ENCODE measurements at regions of chr9 and their contacts with region 1.

Region 1: DNA sequence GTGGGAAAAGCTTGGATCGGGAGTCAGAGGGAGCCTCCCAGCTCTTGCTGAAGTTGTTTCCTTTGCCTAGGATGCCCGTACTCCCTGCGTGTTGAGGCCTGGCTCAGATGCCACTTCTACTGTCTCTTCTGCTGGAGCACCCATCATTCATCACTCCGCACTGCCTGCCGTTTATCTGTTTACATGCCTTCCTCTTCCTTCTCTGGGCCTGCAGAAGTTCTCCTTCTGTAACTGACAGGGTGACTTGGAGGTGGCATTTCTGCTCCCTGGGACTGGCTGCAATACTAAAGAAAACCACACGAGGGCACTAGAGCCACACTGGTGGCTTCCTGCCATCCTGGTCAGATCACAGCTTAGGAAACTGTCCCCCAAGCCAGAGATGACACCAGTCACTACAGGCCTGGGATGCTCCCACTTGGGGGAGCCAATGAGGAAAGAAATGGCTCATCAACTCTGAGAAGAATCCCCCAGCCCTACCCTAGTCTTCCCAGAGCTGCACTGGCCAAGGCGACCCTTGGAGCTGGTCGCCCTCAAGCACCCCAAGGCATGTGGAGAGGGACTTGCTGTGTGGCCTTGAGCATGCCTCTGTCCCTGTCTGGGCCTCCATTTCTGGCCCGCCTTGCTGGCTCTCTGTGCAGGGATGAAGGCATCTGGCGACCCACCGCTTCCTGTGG is 9.7 kb upstream of the SLC25A51 start:
- DNase-seq: peak; percentile 54 to 85 (median 65)
- ATAC-seq: peak; percentile 89
- H3K4me3 ChIP-seq: no peak overlapping the region
- H3K4me3 Mint-ChIP-seq: no peak overlapping the region
- H3K27ac ChIP-seq: no peak overlapping the region
- H3K27ac Mint-ChIP-seq: peak overlapping the region in 1 of 9 donors; percentile 59
- H3K4me1 ChIP-seq: no peaks in the 10 kb centered on the region
- H3K4me1 Mint-ChIP-seq: peaks cover 0 to 7% (median 4%) of the 10 kb centered on the region in 7 donors
- H3K27me3 ChIP-seq: no peaks in the 10 kb centered on the region
- H3K27me3 Mint-ChIP-seq: peaks cover 0 to 4% (median 0%) of the 10 kb centered on the region in 5 donors

Region 2: GRCh38 chr9:38035873-38036272 is 122.3 kb after region 1 on chr9:
- CTCF ChIA-PET with region 1: no interaction called
- POLR2A ChIA-PET with region 1: no interaction called
- intact Hi-C with region 1: no loop called
- DNase-seq: no peak
- ATAC-seq: no peak
- H3K4me3 ChIP-seq: no peak overlapping the region
- H3K4me3 Mint-ChIP-seq: no peak overlapping the region
- H3K27ac ChIP-seq: no peak overlapping the region
- H3K27ac Mint-ChIP-seq: no peak overlapping the region
- H3K4me1 ChIP-seq: no peaks in the 10 kb centered on the region
- H3K4me1 Mint-ChIP-seq: peaks cover 0 to 2% (median 0%) of the 10 kb centered on the region in 7 donors
- H3K27me3 ChIP-seq: no peaks in the 10 kb centered on the region
- H3K27me3 Mint-ChIP-seq: peaks cover 0 to 3% (median 0%) of the 10 kb centered on the region in 5 donors

Region 3: DNA sequence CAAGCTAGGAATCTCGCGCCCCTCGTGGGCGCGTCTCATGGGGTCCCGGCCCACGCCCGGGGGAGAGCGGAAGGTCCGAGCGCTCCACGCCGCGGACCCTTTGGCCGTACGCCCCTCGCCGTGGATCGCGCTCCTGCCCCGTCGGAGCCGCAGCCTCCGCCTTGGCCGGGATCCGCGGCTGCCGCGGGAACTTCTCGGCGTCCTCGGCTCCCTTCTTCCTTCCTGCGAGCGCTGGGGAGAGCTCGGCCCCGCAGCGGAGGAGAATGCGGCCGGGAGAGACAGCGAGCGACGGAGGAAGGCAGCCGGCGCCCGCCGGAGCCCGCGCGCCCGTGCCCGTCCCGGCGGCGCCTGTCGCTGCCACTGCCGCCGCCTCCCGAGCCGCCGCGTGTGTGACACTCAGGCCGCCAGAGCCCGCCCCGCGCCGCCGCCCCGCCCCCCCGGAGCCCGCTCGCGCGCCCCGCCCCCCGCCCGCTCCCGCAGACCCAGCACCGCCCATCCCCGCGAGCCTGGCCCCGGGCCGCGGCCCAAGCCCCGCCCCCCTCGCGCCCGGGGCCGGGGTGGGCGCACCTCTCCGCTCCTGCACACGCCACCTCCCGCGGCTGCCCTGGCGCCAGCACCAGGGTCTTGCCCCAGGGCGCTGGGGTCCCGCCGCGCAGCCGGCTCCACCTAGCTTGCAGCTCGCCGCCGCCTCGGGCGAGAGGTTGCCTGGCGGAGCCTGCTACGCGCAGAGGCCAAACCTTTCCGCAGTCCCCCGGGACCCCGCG is 155.4 kb after region 1 on chr9 and contains the start of gene SHB:
- CTCF ChIA-PET with region 1: interaction called, 7 read pairs
- POLR2A ChIA-PET with region 1: interaction called, 3 read pairs
- intact Hi-C with region 1: loop called in 1 of 2 experiments (anchors 2 kb)
- DNase-seq: peak; percentile 54 to 80 (median 75)
- ATAC-seq: peak; percentile 89
- H3K4me3 ChIP-seq: peak within 1 kb of the TSS; percentile 83
- H3K4me3 Mint-ChIP-seq: peak within 1 kb of the TSS; percentile 76 to 96 (median 88)
- H3K27ac ChIP-seq: peak within 1 kb of the TSS; percentile 76
- H3K27ac Mint-ChIP-seq: peak within 1 kb of the TSS in 8 of 9 donors; percentile 44 to 81 (median 73)
- H3K4me1 ChIP-seq: peaks cover 6 to 18% of the 10 kb centered on the region in 2 donors
- H3K4me1 Mint-ChIP-seq: peaks cover 5 to 39% (median 33%) of the 10 kb centered on the region in 7 donors
- H3K27me3 ChIP-seq: no peaks in the 10 kb centered on the region
- H3K27me3 Mint-ChIP-seq: peaks cover 0 to 58% (median 0%) of the 10 kb centered on the region in 5 donors
- total RNA-seq, gene SHB: 0.29 to 2.0 (median 0.81) TPM

Region 4: GRCh38 chr9:38096238-38096805 is 182.7 kb after region 1 on chr9:
- CTCF ChIA-PET with region 1: no interaction called
- POLR2A ChIA-PET with region 1: no interaction called
- intact Hi-C with region 1: no loop called
- DNase-seq: no peak
- ATAC-seq: no peak
- H3K4me3 ChIP-seq: no peak overlapping the region
- H3K4me3 Mint-ChIP-seq: no peak overlapping the region
- H3K27ac ChIP-seq: no peak overlapping the region
- H3K27ac Mint-ChIP-seq: no peak overlapping the region
- H3K4me1 ChIP-seq: no peaks in the 10 kb centered on the region
- H3K4me1 Mint-ChIP-seq: no peaks in the 10 kb centered on the region
- H3K27me3 ChIP-seq: no peaks in the 10 kb centered on the region
- H3K27me3 Mint-ChIP-seq: peaks cover 12 to 26% (median 16%) of the 10 kb centered on the region in 5 donors

Region 5: GRCh38 chr9:38160613-38161215 is 247.1 kb after region 1 on chr9:
- CTCF ChIA-PET with region 1: no interaction called
- POLR2A ChIA-PET with region 1: no interaction called
- intact Hi-C with region 1: loop called (anchors 1 kb)
- DNase-seq: peak; percentile 12 to 65 (median 43)
- ATAC-seq: peak; percentile 54
- H3K4me3 ChIP-seq: no peak overlapping the region
- H3K4me3 Mint-ChIP-seq: no peak overlapping the region
- H3K27ac ChIP-seq: no peak overlapping the region
- H3K27ac Mint-ChIP-seq: peak overlapping the region in 1 of 9 donors; percentile 63
- H3K4me1 ChIP-seq: no peaks in the 10 kb centered on the region
- H3K4me1 Mint-ChIP-seq: peaks cover 0 to 10% (median 4%) of the 10 kb centered on the region in 7 donors
- H3K27me3 ChIP-seq: no peaks in the 10 kb centered on the region
- H3K27me3 Mint-ChIP-seq: peaks cover 0 to 4% (median 0%) of the 10 kb centered on the region in 5 donors

Region 6: GRCh38 chr9:38362852-38363593 is 449.4 kb after region 1 on chr9:
- CTCF ChIA-PET with region 1: interaction called, 7 read pairs
- POLR2A ChIA-PET with region 1: no interaction called
- intact Hi-C with region 1: loop called (anchors 1 to 2 kb)
- DNase-seq: peak in 6 of 9 donors; percentile 20 to 44 (median 32)
- ATAC-seq: peak; percentile 81
- H3K4me3 ChIP-seq: no peak overlapping the region
- H3K4me3 Mint-ChIP-seq: peak overlapping the region in 9 of 10 donors; percentile 43 to 69 (median 52)
- H3K27ac ChIP-seq: no peak overlapping the region
- H3K27ac Mint-ChIP-seq: peak overlapping the region in 2 of 9 donors; percentile 32 to 60
- H3K4me1 ChIP-seq: no peaks in the 10 kb centered on the region
- H3K4me1 Mint-ChIP-seq: peaks cover 0 to 6% (median 5%) of the 10 kb centered on the region in 7 donors
- H3K27me3 ChIP-seq: no peaks in the 10 kb centered on the region
- H3K27me3 Mint-ChIP-seq: peaks cover 0 to 9% (median 8%) of the 10 kb centered on the region in 5 donors

Region 7: DNA sequence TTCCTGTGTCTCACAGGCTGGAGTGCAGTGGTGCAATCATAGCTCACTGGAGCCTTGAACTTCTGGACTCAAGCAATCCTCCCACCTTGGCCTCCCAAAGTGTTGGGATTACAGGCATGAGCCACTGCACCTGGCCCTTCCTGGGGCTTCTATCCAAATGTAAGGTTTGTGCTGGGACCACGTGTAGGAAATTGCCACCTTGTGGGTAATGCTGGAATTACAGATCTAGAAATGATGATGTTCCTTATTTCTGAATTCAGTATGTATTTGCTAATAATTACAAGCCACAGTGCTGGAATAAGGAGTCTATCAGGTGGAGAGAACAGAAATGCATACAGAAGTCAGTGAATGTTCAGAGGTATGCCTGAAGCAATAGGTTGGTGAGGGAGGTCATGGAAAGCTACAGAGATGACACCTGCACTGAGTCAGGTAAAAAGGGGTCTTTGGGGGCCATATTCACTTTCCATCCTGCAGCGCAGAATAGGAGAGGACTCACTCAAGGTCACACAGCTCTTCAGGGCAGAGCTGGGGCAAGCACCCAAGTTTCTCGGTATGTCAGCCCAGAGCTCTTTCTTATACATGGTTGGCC is 519.4 kb after region 1 on chr9:
- CTCF ChIA-PET with region 1: interaction called, 10 read pairs
- POLR2A ChIA-PET with region 1: no interaction called
- intact Hi-C with region 1: loop called in 1 of 2 experiments (anchors 1 kb)
- DNase-seq: peak in 5 of 9 donors; percentile 12 to 33 (median 15)
- ATAC-seq: peak; percentile 56
- H3K4me3 ChIP-seq: no peak overlapping the region
- H3K4me3 Mint-ChIP-seq: no peak overlapping the region
- H3K27ac ChIP-seq: no peak overlapping the region
- H3K27ac Mint-ChIP-seq: no peak overlapping the region
- H3K4me1 ChIP-seq: no peaks in the 10 kb centered on the region
- H3K4me1 Mint-ChIP-seq: peaks cover 4 to 32% (median 20%) of the 10 kb centered on the region in 7 donors
- H3K27me3 ChIP-seq: no peaks in the 10 kb centered on the region
- H3K27me3 Mint-ChIP-seq: peaks cover 0 to 7% (median 2%) of the 10 kb centered on the region in 5 donors